ENCODE measurements at regions of chr2 and their contacts with region 1.

Region 1: DNA sequence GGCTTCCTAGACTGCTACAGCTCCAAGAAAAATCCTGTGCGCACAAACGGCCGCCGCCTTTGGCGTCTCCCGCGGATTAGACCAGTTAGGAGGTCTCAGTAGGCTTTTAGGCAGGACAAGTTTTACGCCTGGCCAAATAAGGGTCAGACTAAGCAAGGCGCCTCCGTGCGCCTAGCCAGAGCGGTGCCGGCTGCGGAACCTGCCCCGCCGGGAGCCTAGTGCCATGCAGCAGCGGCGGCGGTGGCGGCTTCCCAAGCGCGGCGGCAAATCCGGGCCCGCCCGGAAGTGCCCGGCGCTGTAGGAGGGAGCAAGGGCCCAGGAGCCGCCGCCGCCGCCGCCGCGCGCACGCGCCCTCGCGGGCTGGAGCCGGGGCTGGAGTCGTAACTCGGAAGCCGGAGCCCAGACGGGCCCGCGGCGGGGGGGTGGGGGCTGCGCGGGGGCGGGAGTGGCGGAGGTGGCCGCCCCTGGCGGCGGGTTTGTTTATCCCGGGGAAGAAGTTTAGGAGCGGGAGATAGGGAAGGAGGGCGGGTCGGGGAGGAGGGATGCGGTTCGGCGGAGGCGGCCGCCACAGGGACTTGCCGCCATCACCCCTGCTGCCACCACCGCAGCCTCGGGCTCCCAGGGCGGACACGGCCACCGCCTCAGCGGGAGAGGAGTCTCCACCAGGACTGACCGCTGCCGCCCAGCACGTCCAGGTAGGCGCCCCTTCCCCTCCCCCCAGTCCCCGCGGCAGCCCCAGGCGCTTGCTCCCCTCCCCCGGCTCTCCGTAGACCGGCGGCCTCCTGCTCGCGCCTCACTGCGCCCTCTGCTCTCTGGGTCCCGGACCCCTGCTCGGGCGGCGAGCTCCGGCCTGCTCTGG is at the start of gene SPOPL:
- DNase-seq: peak; percentile 90
- H3K4me3 ChIP-seq: peak within 1 kb of the TSS; percentile 93 to 97 (median 96)
- H3K27ac ChIP-seq: peak within 1 kb of the TSS; percentile 92
- H3K4me1 ChIP-seq: peaks cover 26% of the 10 kb centered on the region
- H3K27me3 ChIP-seq: no peaks in the 10 kb centered on the region
- CTCF ChIP-seq: no peak
- POLR2A ChIP-seq: peak; percentile 90
- total RNA-seq, gene SPOPL: 14.9 and 17.4 TPM in 2 replicates

Region 2: GRCh38 chr2:137947728-137948336 is 553.8 kb before region 1 on chr2:
- CTCF ChIA-PET with region 1: no interaction called
- POLR2A ChIA-PET with region 1: no interaction called
- dilution Hi-C with region 1: no loop called
- intact Hi-C with region 1: loop called (anchors 5 kb)
- DNase-seq: peak; percentile 82
- H3K4me3 ChIP-seq: no peak overlapping the region
- H3K27ac ChIP-seq: no peak overlapping the region
- H3K4me1 ChIP-seq: no peaks in the 10 kb centered on the region
- H3K27me3 ChIP-seq: no peaks in the 10 kb centered on the region
- CTCF ChIP-seq: peak; percentile 45 to 62
- POLR2A ChIP-seq: no peak

Region 3: DNA sequence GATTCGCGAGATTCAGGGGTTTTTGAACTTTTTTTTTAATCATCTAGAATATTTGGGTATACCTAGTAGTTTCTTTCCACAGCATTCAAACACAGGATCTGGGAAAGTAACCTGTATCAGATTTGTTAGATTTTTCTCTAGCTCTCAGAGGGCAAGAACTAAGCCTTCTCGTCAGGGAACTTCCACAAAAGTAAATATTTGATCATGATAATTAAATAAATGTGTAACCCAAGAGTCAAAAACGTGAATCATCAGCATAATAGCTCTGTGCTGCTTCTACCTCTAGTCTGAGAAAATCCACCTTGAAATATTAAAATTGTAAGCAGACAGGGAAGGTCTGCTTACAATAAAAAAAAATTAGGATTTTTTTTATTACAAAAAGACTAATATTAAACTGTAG is 225.8 kb before region 1 on chr2:
- CTCF ChIA-PET with region 1: no interaction called
- POLR2A ChIA-PET with region 1: no interaction called
- dilution Hi-C with region 1: no loop called
- intact Hi-C with region 1: loop called (anchors 10 kb)
- DNase-seq: no peak
- H3K4me3 ChIP-seq: no peak overlapping the region
- H3K27ac ChIP-seq: no peak overlapping the region
- H3K4me1 ChIP-seq: peaks cover 10% of the 10 kb centered on the region
- H3K27me3 ChIP-seq: no peaks in the 10 kb centered on the region
- CTCF ChIP-seq: no peak
- POLR2A ChIP-seq: no peak

Region 4: DNA sequence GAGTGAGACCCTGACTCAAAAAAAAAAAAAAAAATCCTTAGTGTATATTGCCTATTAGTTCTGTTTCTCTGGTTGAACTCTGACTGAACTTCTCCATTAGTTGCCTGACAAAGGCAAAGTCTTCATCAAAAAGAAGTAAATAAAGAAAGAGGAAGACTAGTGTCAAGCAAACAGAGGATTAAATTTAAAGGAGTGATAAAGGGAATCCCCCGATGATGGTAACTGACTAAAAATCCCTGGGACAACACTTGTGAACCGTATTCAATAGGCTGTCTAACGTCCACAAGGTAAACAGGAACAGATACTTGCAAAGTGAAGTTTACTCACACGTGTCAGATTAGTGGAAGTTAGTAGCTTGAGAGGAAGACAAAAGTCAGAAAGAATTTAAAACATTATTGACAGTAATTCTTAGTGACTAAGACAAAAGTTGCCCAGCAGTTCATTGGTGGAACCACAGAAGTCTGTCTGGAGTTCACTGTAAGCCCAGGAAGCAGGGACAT is 26.3 kb before region 1 on chr2:
- CTCF ChIA-PET with region 1: no interaction called
- POLR2A ChIA-PET with region 1: interaction called, 5 read pairs
- dilution Hi-C with region 1: no loop called
- intact Hi-C with region 1: loop called (anchors 1 kb)
- DNase-seq: peak; percentile 68
- H3K4me3 ChIP-seq: no peak overlapping the region
- H3K27ac ChIP-seq: peak overlapping the region; percentile 72
- H3K4me1 ChIP-seq: peaks cover 21% of the 10 kb centered on the region
- H3K27me3 ChIP-seq: no peaks in the 10 kb centered on the region
- CTCF ChIP-seq: no peak
- POLR2A ChIP-seq: no peak

Region 5: GRCh38 chr2:138787053-138787666 is 285.5 kb after region 1 on chr2:
- CTCF ChIA-PET with region 1: no interaction called
- POLR2A ChIA-PET with region 1: no interaction called
- dilution Hi-C with region 1: no loop called
- intact Hi-C with region 1: loop called (anchors 10 kb)
- DNase-seq: peak; percentile 52
- H3K4me3 ChIP-seq: no peak overlapping the region
- H3K27ac ChIP-seq: no peak overlapping the region
- H3K4me1 ChIP-seq: no peaks in the 10 kb centered on the region
- H3K27me3 ChIP-seq: peaks cover 9 to 11% of the 10 kb centered on the region in 2 experiments
- CTCF ChIP-seq: peak; percentile 32 to 47
- POLR2A ChIP-seq: no peak

Measured in endothelial cell of umbilical vein (primary cell).